Activated naive CD4-positive, alpha-beta T cell treated with anti-CD3 and anti-CD28 coated beads, Interleukin-2, amount 10 ng/mL, durations not matched to agents 7 days and 5 days (primary cell): ENCODE measurements at regions of chr3 and their contacts with region 1.

Region 1: DNA sequence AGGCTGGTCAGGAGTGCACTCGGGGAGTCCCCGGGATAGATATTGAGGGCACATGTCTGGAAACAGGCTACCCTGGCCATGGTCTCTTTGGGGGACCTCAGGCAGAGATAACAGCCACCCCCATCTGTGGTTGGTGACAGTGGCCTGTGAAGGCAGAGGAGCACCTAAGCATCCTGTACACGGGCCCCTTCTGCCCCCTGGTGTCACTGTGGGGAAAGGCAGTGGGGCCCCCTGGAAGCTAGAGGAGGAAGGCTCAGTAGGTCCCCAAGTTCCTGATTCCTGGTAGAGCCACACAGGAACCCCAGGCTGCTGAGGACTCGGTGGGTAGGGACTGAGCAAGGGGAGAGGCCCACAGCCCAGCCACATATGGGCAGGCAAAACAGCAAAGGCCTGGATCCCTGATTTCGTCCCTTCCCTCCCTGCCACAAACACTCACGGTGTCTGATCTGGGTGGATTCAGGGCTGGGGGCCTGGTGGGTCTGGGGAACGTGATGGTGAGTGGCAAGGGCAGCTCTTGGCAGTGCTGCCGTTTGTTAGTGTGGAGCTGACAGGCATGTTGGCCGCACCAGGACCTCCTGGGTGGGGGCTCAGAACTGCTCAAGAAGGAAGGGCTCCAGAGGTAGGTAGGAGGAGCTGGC is 14.1 kb upstream of the CXCR6 start:
- DNase-seq: peak; percentile 78
- H3K4me3 Mint-ChIP-seq: no peak overlapping the region
- H3K27ac Mint-ChIP-seq: no peak overlapping the region
- H3K4me1 Mint-ChIP-seq: no peaks in the 10 kb centered on the region
- H3K27me3 Mint-ChIP-seq: no peaks in the 10 kb centered on the region

Region 2: GRCh38 chr3:45760878-45761711 is 168.1 kb before region 1 on chr3:
- CTCF ChIA-PET with region 1: interaction called, 87 read pairs
- DNase-seq: peak; percentile 61
- H3K4me3 Mint-ChIP-seq: no peak overlapping the region
- H3K27ac Mint-ChIP-seq: no peak overlapping the region
- H3K4me1 Mint-ChIP-seq: peaks cover 2% of the 10 kb centered on the region
- H3K27me3 Mint-ChIP-seq: peaks cover 54% of the 10 kb centered on the region

Region 3: GRCh38 chr3:45816544-45816943 is 112.6 kb before region 1 on chr3:
- CTCF ChIA-PET with region 1: no interaction called
- DNase-seq: no peak
- H3K4me3 Mint-ChIP-seq: no peak overlapping the region
- H3K27ac Mint-ChIP-seq: no peak overlapping the region
- H3K4me1 Mint-ChIP-seq: no peaks in the 10 kb centered on the region
- H3K27me3 Mint-ChIP-seq: peaks cover 10% of the 10 kb centered on the region